Activated T-helper 2 cell treated with anti-CD3 and anti-CD28 coated beads, Interferon-gamma antibody, Interleukin-2, Interleukin-4, amounts not matched to agents 10 μg/mL and 5 μg/mL and 100 μg/mL, durations not matched to agents 14 hours and 24 hours and 36 hours (primary cell): ENCODE measurements at regions of chr15 and their contacts with region 1.

Region 1: GRCh38 chr15:33086507-33087121 is 107.9 kb downstream of the FMN1 start:
- DNase-seq: no peak
- H3K4me3 Mint-ChIP-seq: no peak overlapping the region
- H3K27ac Mint-ChIP-seq: no peak overlapping the region
- H3K4me1 Mint-ChIP-seq: no peaks in the 10 kb centered on the region
- H3K27me3 Mint-ChIP-seq: peaks cover 12% of the 10 kb centered on the region

Region 2: DNA sequence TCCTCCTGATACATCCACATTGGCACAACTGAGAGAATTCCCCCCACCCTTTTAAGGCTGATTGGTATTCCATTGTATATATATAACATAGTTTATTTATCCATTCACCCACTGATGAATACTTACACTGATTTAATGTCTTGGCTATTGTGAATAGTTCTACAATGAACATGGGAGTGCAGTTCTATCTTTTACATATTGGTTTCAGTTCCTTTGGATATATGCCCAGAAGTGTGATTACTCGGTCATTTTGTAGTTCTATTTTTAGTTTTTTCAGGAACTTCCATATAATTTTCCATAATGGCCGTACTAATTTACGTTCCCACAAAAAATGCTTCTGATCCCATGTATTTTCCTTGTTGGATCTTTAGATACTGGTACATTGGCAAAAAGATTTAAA is 27.4 kb before region 1 on chr15:
- intact Hi-C with region 1: no loop called
- DNase-seq: no peak
- H3K4me3 Mint-ChIP-seq: no peak overlapping the region
- H3K27ac Mint-ChIP-seq: no peak overlapping the region
- H3K4me1 Mint-ChIP-seq: no peaks in the 10 kb centered on the region
- H3K27me3 Mint-ChIP-seq: peaks cover 8% of the 10 kb centered on the region

Region 3: DNA sequence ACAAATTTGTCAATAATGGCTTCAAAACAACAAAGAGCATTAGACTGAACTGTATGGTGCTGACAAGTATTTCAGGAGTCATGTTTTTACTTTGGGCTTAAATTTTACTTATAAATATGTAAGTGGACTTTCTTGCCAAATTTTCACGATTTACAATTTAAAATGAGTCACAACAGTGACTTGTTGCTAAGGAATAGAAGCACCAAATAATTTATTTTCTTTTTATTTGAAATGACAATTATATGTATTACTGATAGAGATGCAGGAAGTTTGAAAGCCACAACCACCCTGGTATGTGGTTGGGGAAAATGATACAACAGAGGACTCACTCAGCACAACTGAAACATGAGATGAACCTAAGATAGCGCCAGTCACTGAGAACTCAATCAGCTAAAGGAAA is 17.6 kb after region 1 on chr15:
- intact Hi-C with region 1: loop called (anchors 2 kb)
- DNase-seq: peak; percentile 27
- H3K4me3 Mint-ChIP-seq: no peak overlapping the region
- H3K27ac Mint-ChIP-seq: no peak overlapping the region
- H3K4me1 Mint-ChIP-seq: peaks cover 8% of the 10 kb centered on the region
- H3K27me3 Mint-ChIP-seq: peaks cover 48% of the 10 kb centered on the region

Region 4: GRCh38 chr15:33132722-33133345 is 46.2 kb after region 1 on chr15:
- intact Hi-C with region 1: loop called (anchors 1 kb)
- DNase-seq: no peak
- H3K4me3 Mint-ChIP-seq: no peak overlapping the region
- H3K27ac Mint-ChIP-seq: no peak overlapping the region
- H3K4me1 Mint-ChIP-seq: no peaks in the 10 kb centered on the region
- H3K27me3 Mint-ChIP-seq: peaks cover 17% of the 10 kb centered on the region

Region 5: DNA sequence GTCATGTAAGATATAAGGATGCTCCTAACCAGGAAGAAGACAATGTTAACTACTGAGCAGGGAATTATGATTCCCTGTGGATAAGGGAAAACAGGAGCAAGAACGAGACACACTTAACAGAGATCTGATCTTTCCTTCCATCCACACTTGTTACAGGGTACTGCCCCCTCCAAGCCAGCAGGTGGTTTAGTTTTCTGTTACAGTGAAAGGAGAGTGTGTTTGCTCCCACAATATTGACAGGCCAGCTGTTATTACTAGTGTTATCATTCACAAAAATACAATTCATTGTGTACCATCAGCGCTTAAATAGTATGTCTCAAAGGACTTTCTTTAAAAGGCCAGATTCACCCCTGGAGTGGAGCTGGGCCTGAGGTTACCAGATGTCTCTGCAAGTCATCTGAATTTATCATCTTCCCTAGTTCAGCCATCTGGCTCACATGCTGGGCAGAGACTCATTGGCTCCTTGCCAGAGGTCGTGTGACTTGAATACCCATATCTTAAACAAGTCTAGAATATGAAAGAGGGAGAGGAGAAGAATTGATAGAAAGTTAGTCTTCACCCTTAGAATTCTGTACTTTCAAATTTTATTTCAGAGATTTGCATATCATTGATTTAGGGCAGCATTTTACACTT is 124.7 kb after region 1 on chr15:
- intact Hi-C with region 1: loop called (anchors 5 kb)
- DNase-seq: no peak
- H3K4me3 Mint-ChIP-seq: no peak overlapping the region
- H3K27ac Mint-ChIP-seq: no peak overlapping the region
- H3K4me1 Mint-ChIP-seq: peaks cover 12% of the 10 kb centered on the region
- H3K27me3 Mint-ChIP-seq: peaks cover 7% of the 10 kb centered on the region